Naive thymus-derived CD4-positive, alpha-beta T cell (primary cell): ENCODE measurements at regions of chr11 and their contacts with region 1.

Region 1: GRCh38 chr11:65497141-65498041 is 1.5 kb upstream of the MALAT1 start:
- DNase-seq: peak; percentile 95 to 99 (median 98)
- ATAC-seq: peak; percentile 89
- H3K4me3 ChIP-seq: peak overlapping the region; percentile 99
- H3K4me3 Mint-ChIP-seq: no peak overlapping the region
- H3K27ac ChIP-seq: peak overlapping the region; percentile 99
- H3K27ac Mint-ChIP-seq: no peak overlapping the region
- H3K4me1 ChIP-seq: peaks cover 11 to 12% of the 10 kb centered on the region in 2 donors
- H3K4me1 Mint-ChIP-seq: peaks cover 13 to 43% (median 24%) of the 10 kb centered on the region in 7 donors
- H3K27me3 ChIP-seq: no peaks in the 10 kb centered on the region
- H3K27me3 Mint-ChIP-seq: peaks cover 0 to 6% (median 0%) of the 10 kb centered on the region in 5 donors

Region 2: DNA sequence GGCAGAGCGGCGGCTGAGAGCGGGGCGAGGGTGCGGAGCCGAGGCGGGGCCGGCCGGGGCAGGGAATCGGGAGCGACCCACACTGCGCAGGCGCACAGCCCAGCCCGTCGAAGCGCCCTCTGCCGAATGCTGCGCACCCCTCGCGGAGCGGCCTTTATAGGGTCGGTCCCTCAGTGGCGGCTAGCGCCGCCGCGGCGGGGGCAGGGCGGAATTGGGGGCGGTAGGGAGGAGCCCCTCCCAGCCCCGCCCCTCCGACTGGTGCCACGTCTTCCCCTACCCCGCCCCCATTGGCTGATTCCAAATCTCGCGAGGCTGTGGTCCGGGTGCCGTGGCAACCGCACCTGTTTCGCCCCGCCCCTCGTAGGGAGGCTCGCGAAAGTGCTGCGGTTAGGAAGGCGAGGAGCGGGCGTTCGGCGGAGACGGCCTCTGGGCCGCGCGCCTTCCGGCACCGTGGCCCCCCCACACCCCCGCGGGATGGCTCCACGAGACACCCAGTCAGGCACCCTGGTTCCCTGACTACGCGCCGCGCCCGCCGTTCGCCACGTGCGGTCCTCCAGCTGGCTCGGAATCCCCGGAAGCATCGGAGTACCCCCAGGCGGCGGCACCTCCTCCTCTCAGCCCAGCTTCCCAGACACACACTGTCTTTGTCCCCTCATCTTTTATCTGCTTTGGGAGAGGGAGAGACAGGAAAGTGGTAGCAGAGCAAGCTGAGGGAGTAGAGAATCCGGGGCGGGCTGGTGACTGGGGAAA is 618.7 kb before region 1 on chr11 and contains the start of gene EHD1:
- CTCF ChIA-PET with region 1: no interaction called
- POLR2A ChIA-PET with region 1: interaction called, 4 read pairs
- intact Hi-C with region 1: loop called in 1 of 2 experiments (anchors 1 kb)
- DNase-seq: peak; percentile 98 to 99 (median 99)
- ATAC-seq: peak; percentile 91
- H3K4me3 ChIP-seq: peak within 1 kb of the TSS; percentile 100
- H3K4me3 Mint-ChIP-seq: peak within 1 kb of the TSS; percentile 95 to 99 (median 98)
- H3K27ac ChIP-seq: peak within 1 kb of the TSS; percentile 81
- H3K27ac Mint-ChIP-seq: peak within 1 kb of the TSS; percentile 88 to 98 (median 94)
- H3K4me1 ChIP-seq: peaks cover 39 to 45% of the 10 kb centered on the region in 2 donors
- H3K4me1 Mint-ChIP-seq: peaks cover 49 to 65% (median 60%) of the 10 kb centered on the region in 7 donors
- H3K27me3 ChIP-seq: no peaks in the 10 kb centered on the region
- H3K27me3 Mint-ChIP-seq: no peaks in the 10 kb centered on the region
- total RNA-seq, gene EHD1: 124 to 263 (median 208) TPM

Region 3: GRCh38 chr11:65366340-65366773 is 131.0 kb before region 1 on chr11:
- CTCF ChIA-PET with region 1: no interaction called
- POLR2A ChIA-PET with region 1: interaction called, 21 read pairs
- intact Hi-C with region 1: no loop called
- DNase-seq: peak in 7 of 9 donors; percentile 47 to 71 (median 59)
- ATAC-seq: peak; percentile 82
- H3K4me3 ChIP-seq: no peak overlapping the region
- H3K4me3 Mint-ChIP-seq: no peak overlapping the region
- H3K27ac ChIP-seq: no peak overlapping the region
- H3K27ac Mint-ChIP-seq: no peak overlapping the region
- H3K4me1 ChIP-seq: no peaks in the 10 kb centered on the region
- H3K4me1 Mint-ChIP-seq: peaks cover 0 to 9% (median 0%) of the 10 kb centered on the region in 7 donors
- H3K27me3 ChIP-seq: no peaks in the 10 kb centered on the region
- H3K27me3 Mint-ChIP-seq: no peaks in the 10 kb centered on the region

Region 4: GRCh38 chr11:65432686-65433582 is 64.5 kb before region 1 on chr11:
- CTCF ChIA-PET with region 1: interaction called, 4 read pairs
- POLR2A ChIA-PET with region 1: interaction called, 2,591 read pairs
- intact Hi-C with region 1: loop called in 1 of 2 experiments (anchors 1 kb)
- DNase-seq: peak in 7 of 9 donors; percentile 49 to 76 (median 62)
- ATAC-seq: peak; percentile 36
- H3K4me3 ChIP-seq: no peak overlapping the region
- H3K4me3 Mint-ChIP-seq: peak overlapping the region in 6 of 10 donors; percentile 25 to 94 (median 48)
- H3K27ac ChIP-seq: no peak overlapping the region
- H3K27ac Mint-ChIP-seq: peak overlapping the region; percentile 69 to 100 (median 87)
- H3K4me1 ChIP-seq: peaks cover 47 to 51% of the 10 kb centered on the region in 2 donors
- H3K4me1 Mint-ChIP-seq: peaks cover 55 to 89% (median 81%) of the 10 kb centered on the region in 7 donors
- H3K27me3 ChIP-seq: no peaks in the 10 kb centered on the region
- H3K27me3 Mint-ChIP-seq: no peaks in the 10 kb centered on the region

Region 5: GRCh38 chr11:65477149-65477965 is 20.0 kb before region 1 on chr11:
- CTCF ChIA-PET with region 1: interaction called, 19 read pairs
- POLR2A ChIA-PET with region 1: interaction called, 1,164 read pairs
- intact Hi-C with region 1: loop called (anchors 1 kb)
- DNase-seq: peak; percentile 69 to 96 (median 75)
- ATAC-seq: peak; percentile 94
- H3K4me3 ChIP-seq: peak overlapping the region; percentile 97
- H3K4me3 Mint-ChIP-seq: peak overlapping the region; percentile 87 to 100 (median 96)
- H3K27ac ChIP-seq: peak overlapping the region; percentile 96
- H3K27ac Mint-ChIP-seq: peak overlapping the region; percentile 94 to 100 (median 99)
- H3K4me1 ChIP-seq: peaks cover 6 to 17% of the 10 kb centered on the region in 2 donors
- H3K4me1 Mint-ChIP-seq: peaks cover 8 to 30% (median 14%) of the 10 kb centered on the region in 7 donors
- H3K27me3 ChIP-seq: no peaks in the 10 kb centered on the region
- H3K27me3 Mint-ChIP-seq: peaks cover 0 to 2% (median 0%) of the 10 kb centered on the region in 5 donors

Region 6: GRCh38 chr11:65569973-65570918 is 72.9 kb after region 1 on chr11 and contains the start of gene ZNRD2:
- CTCF ChIA-PET with region 1: no interaction called
- POLR2A ChIA-PET with region 1: interaction called, 64 read pairs
- intact Hi-C with region 1: loop called in 1 of 2 experiments (anchors 2 kb)
- DNase-seq: peak; percentile 94 to 99 (median 98)
- ATAC-seq: peak; percentile 82
- H3K4me3 ChIP-seq: peak within 1 kb of the TSS; percentile 96
- H3K4me3 Mint-ChIP-seq: peak within 1 kb of the TSS; percentile 91 to 100 (median 97)
- H3K27ac ChIP-seq: peak within 1 kb of the TSS; percentile 96
- H3K27ac Mint-ChIP-seq: peak within 1 kb of the TSS; percentile 89 to 100 (median 99)
- H3K4me1 ChIP-seq: peaks cover 63 to 64% of the 10 kb centered on the region in 2 donors
- H3K4me1 Mint-ChIP-seq: peaks cover 49 to 77% (median 69%) of the 10 kb centered on the region in 7 donors
- H3K27me3 ChIP-seq: no peaks in the 10 kb centered on the region
- H3K27me3 Mint-ChIP-seq: no peaks in the 10 kb centered on the region
- total RNA-seq, gene ZNRD2: 29.1 to 40.9 (median 32.9) TPM

Region 7: GRCh38 chr11:66282468-66283386 is 785.3 kb after region 1 on chr11:
- CTCF ChIA-PET with region 1: no interaction called
- POLR2A ChIA-PET with region 1: no interaction called
- intact Hi-C with region 1: loop called in 1 of 2 experiments (anchors 10 kb)
- DNase-seq: peak; percentile 96 to 100 (median 99)
- ATAC-seq: peak; percentile 94
- H3K4me3 ChIP-seq: no peak overlapping the region
- H3K4me3 Mint-ChIP-seq: peak overlapping the region in 9 of 10 donors; percentile 16 to 72 (median 59)
- H3K27ac ChIP-seq: peak overlapping the region; percentile 27
- H3K27ac Mint-ChIP-seq: peak overlapping the region; percentile 68 to 93 (median 85)
- H3K4me1 ChIP-seq: peaks cover 16 to 21% of the 10 kb centered on the region in 2 donors
- H3K4me1 Mint-ChIP-seq: peaks cover 18 to 52% (median 37%) of the 10 kb centered on the region in 7 donors
- H3K27me3 ChIP-seq: no peaks in the 10 kb centered on the region
- H3K27me3 Mint-ChIP-seq: peaks cover 0 to 14% (median 0%) of the 10 kb centered on the region in 5 donors